AG04449 (cell line): ENCODE measurements at regions of chr16 and their contacts with region 1.

Region 1: GRCh38 chr16:31094424-31095120 is at the start of gene VKORC1:
- DNase-seq: peak; percentile 78
- H3K4me3 ChIP-seq: peak within 1 kb of the TSS; percentile 95
- CTCF ChIP-seq: no peak

Region 2: DNA sequence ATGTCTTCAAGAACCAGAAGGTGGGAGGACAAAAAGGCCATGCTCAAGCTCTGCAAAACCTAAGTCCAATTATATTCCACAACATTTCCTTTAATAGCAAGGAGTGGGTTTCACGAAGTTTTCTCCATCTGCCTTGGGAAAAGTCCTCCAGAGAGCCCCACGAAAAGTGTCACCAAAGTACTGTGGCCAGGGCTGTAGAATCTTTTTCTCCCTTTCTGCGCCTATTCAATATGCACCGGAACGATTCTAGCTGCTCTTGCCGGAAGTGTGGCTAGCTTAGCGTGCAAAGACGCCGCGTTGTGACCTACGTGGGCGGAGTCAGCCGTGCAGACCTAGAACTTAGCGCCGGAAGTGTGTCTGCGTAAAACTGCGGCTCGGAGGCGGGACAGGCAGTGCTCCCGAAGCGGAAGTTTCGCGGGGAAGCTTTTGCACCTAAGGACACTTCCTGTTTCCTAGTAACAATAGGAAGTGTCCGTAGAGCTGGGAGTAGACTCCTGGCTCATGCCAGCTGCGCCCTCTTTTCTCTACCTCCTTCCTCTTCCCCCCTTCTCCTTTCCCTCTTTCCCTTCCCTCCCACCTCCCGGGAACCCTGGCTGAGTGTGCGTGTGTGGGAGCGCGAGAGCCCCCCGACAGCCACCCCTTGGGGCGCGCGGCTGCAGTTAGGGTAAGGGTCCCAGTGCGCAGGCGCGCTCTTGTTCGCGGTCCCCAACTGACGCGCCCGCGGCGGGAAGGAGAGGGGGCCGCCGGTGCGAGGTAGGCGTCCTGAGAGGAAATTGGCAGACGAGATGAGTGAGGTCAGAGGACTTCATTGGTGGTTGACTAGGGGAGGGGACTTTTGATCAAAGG is 20.4 kb before region 1 on chr16 and contains the starts of genes ZNF646 and ZNF668:
- CTCF ChIA-PET with region 1: interaction called, 3 read pairs
- POLR2A ChIA-PET with region 1: interaction called, 15 read pairs
- DNase-seq: peak; percentile 94
- H3K4me3 ChIP-seq: peak within 1 kb of the TSS; percentile 98
- CTCF ChIP-seq: no peak

Region 3: GRCh38 chr16:31108035-31108793 is 13.6 kb after region 1 on chr16 and contains the start of gene BCKDK:
- CTCF ChIA-PET with region 1: interaction called, 18 read pairs
- POLR2A ChIA-PET with region 1: no interaction called
- DNase-seq: no peak
- H3K4me3 ChIP-seq: peak within 1 kb of the TSS; percentile 77
- CTCF ChIP-seq: no peak